Panc1 (cell line): ENCODE measurements at regions of chr9 and their contacts with region 1.

Region 1: GRCh38 chr9:33623658-33624586 is 99.9 kb downstream of the ANKRD18B start:
- DNase-seq: peak; percentile 66
- ATAC-seq: peak; percentile 99
- H3K4me3 ChIP-seq: no peak overlapping the region
- H3K27ac ChIP-seq: no peak overlapping the region
- H3K4me1 ChIP-seq: peaks cover 1% of the 10 kb centered on the region; the same call in 1 of the 2 replicates
- H3K27me3 ChIP-seq: peaks cover 8% of the 10 kb centered on the region
- CTCF ChIP-seq: peak; percentile 93

Region 2: GRCh38 chr9:33638391-33638915 is 14.5 kb after region 1 on chr9:
- CTCF ChIA-PET with region 1: interaction called, 12 read pairs
- POLR2A ChIA-PET with region 1: no interaction called
- in situ Hi-C with region 1: no loop called
- intact Hi-C with region 1: no loop called
- DNase-seq: no peak
- ATAC-seq: peak; percentile 66
- H3K4me3 ChIP-seq: no peak overlapping the region
- H3K27ac ChIP-seq: no peak overlapping the region
- H3K4me1 ChIP-seq: no peaks in the 10 kb centered on the region
- H3K27me3 ChIP-seq: peaks cover 56% of the 10 kb centered on the region
- CTCF ChIP-seq: no peak

Region 3: GRCh38 chr9:33721674-33722358 is 97.9 kb after region 1 on chr9:
- CTCF ChIA-PET with region 1: interaction called, 67 read pairs
- POLR2A ChIA-PET with region 1: no interaction called
- in situ Hi-C with region 1: no loop called
- intact Hi-C with region 1: loop called (anchors 1 kb)
- DNase-seq: peak; percentile 67
- ATAC-seq: peak; percentile 86
- H3K4me3 ChIP-seq: peak overlapping the region in 1 of 2 experiments; percentile 23; a peak in 1 of 4 replicates
- H3K27ac ChIP-seq: no peak overlapping the region
- H3K4me1 ChIP-seq: no peaks in the 10 kb centered on the region
- H3K27me3 ChIP-seq: peaks cover 7% of the 10 kb centered on the region
- CTCF ChIP-seq: peak; percentile 99